ENCODE measurements at regions of chr17 and their contacts with region 1.

Region 1: GRCh38 chr17:333626-334396 is 18.8 kb downstream of the RPH3AL start:
- DNase-seq: peak; percentile 83 to 91 (median 88)
- ATAC-seq: peak; percentile 81 to 87 (median 84)
- H3K4me3 ChIP-seq: peak overlapping the region in 11 of 12 donors; percentile 17 to 67 (median 55)
- H3K27ac ChIP-seq: peak overlapping the region; percentile 81 to 99 (median 92)
- H3K4me1 ChIP-seq: peaks cover 0 to 50% (median 26%) of the 10 kb centered on the region in 12 donors
- H3K27me3 ChIP-seq: peaks cover 0 to 10% (median 0%) of the 10 kb centered on the region in 9 donors
- CTCF ChIP-seq: no peak
- POLR2A ChIP-seq: peak in 1 of 2 donors; percentile 85

Region 2: DNA sequence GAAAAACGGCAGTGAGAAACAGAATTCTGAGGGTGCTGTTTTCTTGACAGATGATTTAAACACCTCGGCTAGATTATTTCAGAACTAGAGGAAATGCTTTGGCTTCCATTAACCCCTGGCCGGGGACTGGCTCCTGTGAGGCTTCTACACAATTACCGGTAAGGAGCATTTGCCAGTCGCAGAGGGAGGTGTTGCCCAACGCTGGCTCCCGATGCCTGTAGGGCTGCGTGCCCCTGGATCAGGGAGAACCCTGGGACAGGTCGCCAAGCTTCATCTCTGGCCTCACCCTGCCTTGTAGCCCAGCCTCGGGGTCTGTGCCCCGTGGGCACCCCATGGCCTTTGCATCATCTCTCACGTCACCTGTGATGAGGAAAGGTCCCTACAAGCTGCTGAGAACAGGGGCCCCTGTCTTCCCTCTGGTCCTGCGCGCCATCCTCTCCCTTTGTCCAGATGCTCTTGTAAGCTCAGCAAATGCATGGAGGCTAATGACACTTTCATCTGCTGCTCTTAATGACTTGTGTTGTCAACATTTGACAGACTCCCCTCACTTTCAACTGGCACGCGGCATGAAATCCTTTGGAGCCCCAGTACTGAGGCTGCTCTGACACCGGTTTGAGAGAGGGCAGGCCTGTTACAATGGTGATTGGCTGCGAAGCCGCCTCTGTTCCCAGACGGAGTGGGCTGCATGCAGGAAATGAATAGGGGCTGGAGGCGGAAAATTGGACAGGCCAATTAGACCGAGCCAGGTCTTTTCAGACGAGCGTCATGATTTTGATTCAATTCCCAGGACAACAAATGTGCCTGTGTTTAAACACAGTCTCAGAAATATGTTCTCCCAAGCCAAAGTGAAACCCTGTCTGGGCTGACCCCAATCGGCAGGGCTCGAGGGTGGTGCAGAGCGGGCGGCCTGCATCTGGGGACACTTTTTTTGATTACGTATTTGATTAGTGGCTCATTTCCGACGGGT is 66.8 kb before region 1 on chr17:
- intact Hi-C with region 1: loop called in 1 of 10 experiments (anchors 5 kb)
- DNase-seq: peak; percentile 72 to 82 (median 76)
- ATAC-seq: peak; percentile 84 to 95 (median 94)
- H3K4me3 ChIP-seq: peak overlapping the region in 4 of 12 donors; percentile 12 to 16 (median 14)
- H3K27ac ChIP-seq: peak overlapping the region; percentile 29 to 95 (median 79)
- H3K4me1 ChIP-seq: peaks cover 0 to 32% (median 20%) of the 10 kb centered on the region in 12 donors
- H3K27me3 ChIP-seq: no peaks in the 10 kb centered on the region
- CTCF ChIP-seq: peak in 1 of 12 donors; percentile 12
- POLR2A ChIP-seq: no peak

Region 3: DNA sequence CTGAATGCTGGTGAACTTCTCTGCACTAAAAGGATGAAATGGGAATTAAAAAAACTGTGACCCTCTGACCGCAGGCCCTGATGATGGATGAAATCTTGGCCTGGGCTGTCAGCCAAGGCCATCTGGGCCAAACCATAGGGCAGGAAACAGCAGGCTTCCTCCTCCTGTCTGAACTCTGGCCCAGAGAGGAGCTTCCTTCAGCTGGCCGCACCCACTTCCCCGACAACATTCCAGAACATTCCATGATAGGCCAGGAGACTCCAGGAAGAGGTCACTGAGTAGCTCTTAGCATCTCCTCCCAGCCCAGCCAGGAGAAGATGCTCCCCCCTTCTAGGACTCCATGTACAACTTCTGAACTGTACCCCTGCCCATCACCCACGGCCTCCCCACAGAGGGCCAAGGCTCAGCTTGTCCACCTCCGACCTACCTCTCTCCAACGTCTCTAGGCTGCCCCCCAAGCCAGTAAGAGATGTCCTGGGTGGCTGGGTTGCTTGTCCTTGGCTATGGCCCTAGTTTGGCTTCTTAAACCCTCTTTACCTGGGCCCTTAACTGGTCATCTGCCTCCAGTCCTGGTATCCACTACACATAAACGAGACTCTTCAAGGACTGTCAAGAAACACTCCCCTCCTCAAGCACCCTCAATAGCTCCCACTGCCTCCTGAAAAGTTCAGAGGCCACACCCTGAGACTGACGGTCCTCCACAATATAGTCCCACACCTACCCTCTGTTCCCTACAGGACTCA is 17.1 kb after region 1 on chr17:
- intact Hi-C with region 1: loop called in 2 of 10 experiments (anchors 1 kb)
- DNase-seq: peak; percentile 87 to 94 (median 91)
- ATAC-seq: peak; percentile 85 to 92 (median 88)
- H3K4me3 ChIP-seq: no peak overlapping the region
- H3K27ac ChIP-seq: peak overlapping the region; percentile 76 to 97 (median 92)
- H3K4me1 ChIP-seq: peaks cover 14 to 61% (median 50%) of the 10 kb centered on the region in 12 donors
- H3K27me3 ChIP-seq: no peaks in the 10 kb centered on the region
- CTCF ChIP-seq: no peak
- POLR2A ChIP-seq: peak in 1 of 2 donors; percentile 35